CD8-positive, alpha-beta memory T cell (primary cell): ENCODE measurements at regions of chr1 and their contacts with region 1.

Region 1: GRCh38 chr1:203475012-203475981 is at the start of gene PRELP:
- DNase-seq: no peak
- H3K4me3 ChIP-seq: no peak within 1 kb of the TSS
- H3K4me3 Mint-ChIP-seq: no peak within 1 kb of the TSS
- H3K27ac ChIP-seq: no peak within 1 kb of the TSS
- H3K27ac Mint-ChIP-seq: peak within 1 kb of the TSS in 1 of 8 donors; percentile 0
- H3K4me1 ChIP-seq: no peaks in the 10 kb centered on the region
- H3K4me1 Mint-ChIP-seq: peaks cover 0 to 5% (median 4%) of the 10 kb centered on the region in 3 donors
- H3K27me3 ChIP-seq: peaks cover 8% of the 10 kb centered on the region
- H3K27me3 Mint-ChIP-seq: peaks cover 11 to 45% of the 10 kb centered on the region in 2 donors
- total RNA-seq, gene PRELP: not detected

Region 2: DNA sequence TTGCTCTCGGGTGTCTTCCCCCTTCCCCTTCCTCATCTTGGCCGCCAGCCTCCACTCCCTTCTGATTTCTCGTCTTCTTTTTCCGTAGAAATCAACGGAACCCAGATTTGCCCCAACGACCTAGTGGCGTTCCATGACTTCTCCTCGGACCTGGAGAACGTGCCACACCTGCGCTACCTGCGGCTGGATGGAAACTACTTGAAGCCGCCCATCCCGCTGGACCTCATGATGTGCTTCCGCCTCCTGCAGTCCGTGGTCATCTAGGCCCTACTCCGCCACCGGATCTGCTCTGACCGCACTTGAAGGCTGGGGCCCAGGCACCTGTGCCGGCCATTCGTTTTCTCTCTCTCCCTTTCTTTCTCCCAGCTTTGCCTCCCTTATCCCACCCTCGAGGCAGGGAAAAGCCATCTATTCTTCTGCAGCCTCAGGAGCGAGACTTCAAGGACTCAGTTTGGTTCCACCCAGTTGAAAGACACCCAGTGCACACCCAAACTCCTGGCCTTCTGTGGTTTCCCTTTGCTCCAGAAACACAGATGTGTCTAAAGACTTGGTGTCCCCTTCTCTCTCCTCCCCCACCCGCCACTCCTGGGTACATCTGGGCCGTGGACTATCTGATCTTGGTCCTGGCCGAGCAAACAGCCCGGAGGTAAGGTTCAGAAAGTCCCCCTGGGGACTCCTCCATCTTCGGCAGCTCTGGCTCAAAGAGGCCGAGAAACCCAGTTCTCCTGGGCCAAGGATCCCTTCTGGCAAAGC is 11.5 kb after region 1 on chr1:
- CTCF ChIA-PET with region 1: interaction called, 20 read pairs
- POLR2A ChIA-PET with region 1: no interaction called
- DNase-seq: no peak
- H3K4me3 ChIP-seq: no peak overlapping the region
- H3K4me3 Mint-ChIP-seq: peak overlapping the region in 6 of 7 donors; percentile 79 to 89 (median 83)
- H3K27ac ChIP-seq: no peak overlapping the region
- H3K27ac Mint-ChIP-seq: peak overlapping the region in 2 of 8 donors; percentile 70 to 91
- H3K4me1 ChIP-seq: peaks cover 9% of the 10 kb centered on the region
- H3K4me1 Mint-ChIP-seq: peaks cover 0 to 12% (median 8%) of the 10 kb centered on the region in 3 donors
- H3K27me3 ChIP-seq: no peaks in the 10 kb centered on the region
- H3K27me3 Mint-ChIP-seq: peaks cover 3 to 7% of the 10 kb centered on the region in 2 donors

Region 3: GRCh38 chr1:203593723-203594122 is 118.4 kb after region 1 on chr1:
- CTCF ChIA-PET with region 1: no interaction called
- POLR2A ChIA-PET with region 1: no interaction called
- DNase-seq: peak; percentile 29 to 78 (median 47)
- H3K4me3 ChIP-seq: no peak overlapping the region
- H3K4me3 Mint-ChIP-seq: no peak overlapping the region
- H3K27ac ChIP-seq: no peak overlapping the region
- H3K27ac Mint-ChIP-seq: peak overlapping the region in 2 of 8 donors; percentile 30 to 74
- H3K4me1 ChIP-seq: no peaks in the 10 kb centered on the region
- H3K4me1 Mint-ChIP-seq: peaks cover 10 to 17% (median 11%) of the 10 kb centered on the region in 3 donors
- H3K27me3 ChIP-seq: no peaks in the 10 kb centered on the region
- H3K27me3 Mint-ChIP-seq: no peaks in the 10 kb centered on the region